PC-3 (cell line): ENCODE measurements at regions of chr3 and their contacts with region 1.

Region 1: GRCh38 chr3:149090907-149091306 is 4.6 kb upstream of the HLTF start:
- DNase-seq: no peak
- ATAC-seq: no peak
- H3K4me3 ChIP-seq: no peak overlapping the region
- H3K27ac ChIP-seq: no peak overlapping the region
- H3K4me1 ChIP-seq: 0 out of 2 replicates have a peak, but pooled peaks cover 3% of the 10 kb centered on the region
- H3K27me3 ChIP-seq: no peaks in the 10 kb centered on the region
- CTCF ChIP-seq: no peak

Region 2: DNA sequence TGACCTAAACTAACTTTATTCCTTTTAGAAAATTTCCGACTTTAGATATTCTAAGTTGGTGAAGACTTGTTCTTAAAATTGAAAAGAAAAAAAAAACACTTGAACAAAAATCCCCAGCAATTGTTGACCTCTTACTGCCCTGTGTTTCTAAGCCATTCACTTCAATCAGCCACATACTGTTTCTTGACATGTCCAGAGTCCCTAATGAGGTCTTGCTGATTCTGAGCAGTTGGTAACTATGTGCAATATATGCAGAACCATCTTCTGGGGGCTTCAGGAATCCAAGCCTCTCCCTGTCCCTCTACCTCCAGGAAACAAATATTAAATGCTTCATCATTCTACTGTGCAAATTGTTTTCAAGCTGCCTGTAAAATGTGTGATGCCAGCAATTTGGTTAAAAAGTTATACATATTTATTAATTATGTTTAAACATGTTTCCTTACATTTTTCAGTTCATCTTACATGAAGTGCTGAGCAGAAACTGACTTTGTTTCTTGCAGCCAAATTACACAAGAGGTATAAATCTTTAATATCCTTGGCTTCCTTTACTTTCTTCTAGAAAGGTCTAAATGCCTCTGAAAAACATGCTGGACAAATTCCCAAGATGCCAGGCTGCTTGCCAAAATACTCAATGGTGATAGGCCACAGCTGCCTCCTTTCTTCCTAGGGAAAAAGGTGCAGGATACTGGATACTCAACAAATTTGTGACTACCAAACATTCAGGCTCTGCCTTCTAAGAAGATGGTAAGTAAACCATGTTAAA is 119.3 kb before region 1 on chr3:
- CTCF ChIA-PET with region 1: no interaction called
- POLR2A ChIA-PET with region 1: no interaction called
- intact Hi-C with region 1: loop called (anchors 5 kb)
- DNase-seq: no peak
- ATAC-seq: no peak
- H3K4me3 ChIP-seq: no peak overlapping the region
- H3K27ac ChIP-seq: no peak overlapping the region
- H3K4me1 ChIP-seq: no peaks in the 10 kb centered on the region
- H3K27me3 ChIP-seq: no peaks in the 10 kb centered on the region
- CTCF ChIP-seq: no peak

Region 3: DNA sequence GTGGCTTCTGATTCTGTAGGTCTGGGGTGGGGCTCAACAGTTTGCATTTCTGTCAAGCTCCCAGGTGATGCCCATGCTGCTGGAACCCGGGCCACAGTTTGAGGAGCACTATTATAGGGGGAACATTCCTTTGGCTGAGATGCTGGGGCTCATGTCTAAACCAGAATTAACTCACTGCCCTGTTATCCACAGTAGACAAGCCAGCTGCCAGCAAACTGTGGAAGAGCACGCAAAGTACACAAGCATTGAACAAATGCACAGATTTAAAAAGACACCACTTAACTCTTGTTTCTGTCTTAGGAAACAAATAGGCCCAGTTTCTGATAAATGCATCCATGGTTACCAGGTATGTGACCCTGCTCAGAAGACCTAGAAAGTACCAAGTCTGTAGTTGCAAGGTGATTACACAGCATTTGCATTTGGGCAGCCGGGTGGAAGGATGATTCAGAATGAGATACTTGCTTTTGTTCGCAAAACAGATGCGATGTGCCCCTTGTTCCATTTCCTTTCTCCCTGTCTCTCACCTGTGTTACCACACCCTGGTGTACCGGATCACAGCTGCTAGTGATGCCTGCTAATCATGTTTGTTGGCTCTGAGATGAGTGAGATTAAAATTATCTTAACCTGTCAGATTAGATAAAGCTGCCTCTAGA is 87.1 kb before region 1 on chr3:
- CTCF ChIA-PET with region 1: no interaction called
- POLR2A ChIA-PET with region 1: no interaction called
- intact Hi-C with region 1: no loop called
- DNase-seq: peak; percentile 85
- ATAC-seq: peak; percentile 83
- H3K4me3 ChIP-seq: no peak overlapping the region
- H3K27ac ChIP-seq: peak overlapping the region; percentile 78
- H3K4me1 ChIP-seq: peaks cover 23% of the 10 kb centered on the region
- H3K27me3 ChIP-seq: no peaks in the 10 kb centered on the region
- CTCF ChIP-seq: no peak

Region 4: GRCh38 chr3:149104516-149104915 is 13.6 kb after region 1 on chr3:
- CTCF ChIA-PET with region 1: no interaction called
- POLR2A ChIA-PET with region 1: no interaction called
- intact Hi-C with region 1: no loop called
- DNase-seq: no peak
- ATAC-seq: no peak
- H3K4me3 ChIP-seq: no peak overlapping the region
- H3K27ac ChIP-seq: no peak overlapping the region
- H3K4me1 ChIP-seq: no peaks in the 10 kb centered on the region
- H3K27me3 ChIP-seq: no peaks in the 10 kb centered on the region
- CTCF ChIP-seq: no peak